ENCODE measurements at regions of chr19 and their contacts with region 1.

Region 1: DNA sequence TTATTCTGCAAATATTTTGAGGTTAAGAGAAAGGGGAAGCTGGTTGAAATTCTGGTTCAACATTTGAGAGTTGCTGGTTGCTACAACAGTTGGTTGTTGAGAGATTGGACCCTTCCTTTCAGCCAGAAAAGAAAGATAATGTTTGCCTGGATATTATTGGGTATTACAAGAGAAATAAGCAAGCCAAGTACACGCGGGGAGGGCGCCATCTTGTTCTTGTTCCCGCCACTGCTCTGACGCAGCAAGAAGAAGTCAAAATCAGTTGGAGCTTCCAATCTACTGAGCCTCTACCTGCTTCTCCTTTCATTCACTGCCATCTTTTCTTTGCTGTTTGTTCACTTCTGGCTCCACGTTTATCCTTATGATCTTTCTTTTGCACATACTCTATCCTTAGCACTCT is 18.4 kb downstream of the BSPH1 start:
- DNase-seq: no peak
- ATAC-seq: no peak
- H3K4me3 ChIP-seq: no peak overlapping the region
- H3K27ac ChIP-seq: no peak overlapping the region
- H3K4me1 ChIP-seq: no peaks in the 10 kb centered on the region; a peak in 1 of 5 replicates
- H3K27me3 ChIP-seq: peaks cover 3 to 22% of the 10 kb centered on the region in 2 experiments
- CTCF ChIP-seq: no peak
- EP300 ChIP-seq: no peak
- POLR2A ChIP-seq: no peak
- RAD21 ChIP-seq: no peak

Region 2: GRCh38 chr19:48006762-48007161 is 33.2 kb after region 1 on chr19:
- CTCF ChIA-PET with region 1: no interaction called
- POLR2A ChIA-PET with region 1: no interaction called
- in situ Hi-C with region 1: no loop called
- intact Hi-C with region 1: no loop called
- DNase-seq: peak; percentile 36 to 52 (median 44)
- ATAC-seq: peak; percentile 58; the same call in 2 of the 3 replicates
- H3K4me3 ChIP-seq: no peak overlapping the region
- H3K27ac ChIP-seq: no peak overlapping the region
- H3K4me1 ChIP-seq: no peaks in the 10 kb centered on the region; a peak in 1 of 5 replicates
- H3K27me3 ChIP-seq: no peaks in the 10 kb centered on the region; a peak in 2 of 5 replicates
- CTCF ChIP-seq: peak; percentile 41 to 63 (median 55); a peak in 5 of 6 replicates
- EP300 ChIP-seq: no peak
- POLR2A ChIP-seq: no peak
- RAD21 ChIP-seq: 0 out of 4 replicates have a peak, but pooled peaks of 1 of the 2 experiments have one; percentile 5

Region 3: DNA sequence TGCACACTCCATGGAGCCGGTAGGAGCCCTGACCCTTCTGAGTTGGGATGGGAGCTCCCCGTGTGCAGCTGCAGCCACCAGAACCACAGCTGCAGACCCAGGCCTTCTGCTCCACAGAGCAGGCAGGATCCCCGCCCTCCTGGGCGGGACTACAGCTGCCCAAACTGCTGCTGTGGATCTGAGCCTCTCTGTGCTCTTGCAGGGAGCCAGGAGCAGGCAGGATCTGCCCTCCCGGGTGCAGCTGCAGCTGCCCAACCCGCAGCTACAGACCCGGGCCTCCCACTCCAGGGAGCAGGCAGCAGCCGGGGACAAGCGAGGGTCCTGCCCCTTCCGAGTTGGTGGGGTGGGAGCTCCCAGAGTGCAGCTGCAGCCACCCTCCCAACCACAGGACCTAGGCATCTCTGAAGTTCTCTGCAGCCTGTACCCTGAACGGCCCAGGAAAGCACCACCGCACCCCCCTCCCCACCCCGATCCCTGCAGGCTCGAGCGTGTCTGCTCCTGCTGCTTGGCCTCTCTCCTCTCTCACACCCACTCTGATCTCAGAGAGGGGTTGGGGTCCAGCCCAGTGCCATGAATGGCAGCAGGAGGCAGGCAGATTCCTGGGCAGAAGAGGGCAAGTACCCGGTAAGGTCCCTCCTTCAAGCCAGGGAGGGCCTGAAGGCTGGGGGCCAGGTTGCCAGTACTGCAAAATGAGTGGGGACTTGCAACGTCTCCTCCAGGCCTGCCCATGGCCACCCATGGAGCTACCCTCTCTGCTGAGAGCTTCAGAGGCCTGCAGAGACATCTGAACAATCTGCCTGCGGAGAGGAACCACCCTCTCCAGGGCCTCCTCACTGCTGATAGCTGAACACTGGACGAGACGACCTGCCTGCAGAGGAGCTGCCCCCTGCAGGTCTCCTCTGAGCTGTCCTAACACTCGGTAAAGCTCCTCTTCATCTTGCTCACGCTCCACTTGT is 335.4 kb after region 1 on chr19:
- CTCF ChIA-PET with region 1: no interaction called
- POLR2A ChIA-PET with region 1: no interaction called
- in situ Hi-C with region 1: loop called (anchors 10 kb)
- intact Hi-C with region 1: no loop called
- DNase-seq: peak in 3 of 4 experiments; percentile 35 to 81 (median 45)
- ATAC-seq: peak; percentile 99
- H3K4me3 ChIP-seq: no peak overlapping the region
- H3K27ac ChIP-seq: no peak overlapping the region
- H3K4me1 ChIP-seq: peaks cover 14 to 18% of the 10 kb centered on the region in 2 experiments
- H3K27me3 ChIP-seq: peaks cover 10 to 11% of the 10 kb centered on the region in 2 experiments; a peak in 4 of 5 replicates
- CTCF ChIP-seq: peak; percentile 74 to 78 (median 74)
- EP300 ChIP-seq: no peak
- POLR2A ChIP-seq: no peak
- RAD21 ChIP-seq: peak; percentile 46 to 67; a peak in 3 of 4 replicates

Measured in K562 (cell line).